ENCODE measurements at regions of chr3 and their contacts with region 1.

Region 1: GRCh38 chr3:103847081-103848062 is 1412.6 kb downstream of the ZPLD1 start:
- DNase-seq: no peak
- H3K4me3 ChIP-seq: no peak overlapping the region
- H3K27ac ChIP-seq: no peak overlapping the region
- H3K4me1 ChIP-seq: no peaks in the 10 kb centered on the region
- H3K27me3 ChIP-seq: no peaks in the 10 kb centered on the region
- CTCF ChIP-seq: no peak
- EP300 ChIP-seq: no peak
- POLR2A ChIP-seq: no peak

Region 2: DNA sequence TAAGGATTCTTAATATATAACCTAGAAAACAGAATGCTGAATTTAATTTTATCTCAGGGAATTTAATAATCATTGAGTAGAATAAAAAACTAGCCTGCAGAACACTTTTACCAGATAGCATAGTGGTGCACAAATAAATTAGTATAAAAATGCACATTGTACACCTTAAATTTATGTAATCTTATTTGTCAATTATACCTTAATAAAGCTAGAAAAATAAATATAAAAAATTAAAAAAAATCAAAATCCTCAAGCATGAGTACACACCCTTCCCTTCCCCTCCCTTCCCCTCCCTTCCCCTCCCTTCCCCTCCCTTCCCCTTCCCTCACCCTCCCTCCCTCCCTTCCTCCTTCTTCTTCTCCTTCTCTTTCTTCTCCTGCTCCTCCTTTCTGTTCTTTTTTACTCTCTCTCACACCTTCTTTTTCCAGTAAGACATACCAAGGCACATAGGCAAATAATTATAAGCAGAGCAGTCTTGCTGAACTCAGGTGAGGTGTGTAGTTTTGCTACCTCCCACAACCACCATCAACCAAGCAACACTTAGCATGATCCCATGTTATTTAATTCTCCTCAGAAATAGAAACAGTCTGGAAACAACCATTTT is 17.5 kb before region 1 on chr3:
- intact Hi-C with region 1: loop called in 1 of 4 experiments (anchors 2 kb)
- DNase-seq: no peak
- H3K4me3 ChIP-seq: no peak overlapping the region
- H3K27ac ChIP-seq: no peak overlapping the region
- H3K4me1 ChIP-seq: no peaks in the 10 kb centered on the region
- H3K27me3 ChIP-seq: no peaks in the 10 kb centered on the region
- CTCF ChIP-seq: no peak
- EP300 ChIP-seq: no peak
- POLR2A ChIP-seq: no peak

Region 3: DNA sequence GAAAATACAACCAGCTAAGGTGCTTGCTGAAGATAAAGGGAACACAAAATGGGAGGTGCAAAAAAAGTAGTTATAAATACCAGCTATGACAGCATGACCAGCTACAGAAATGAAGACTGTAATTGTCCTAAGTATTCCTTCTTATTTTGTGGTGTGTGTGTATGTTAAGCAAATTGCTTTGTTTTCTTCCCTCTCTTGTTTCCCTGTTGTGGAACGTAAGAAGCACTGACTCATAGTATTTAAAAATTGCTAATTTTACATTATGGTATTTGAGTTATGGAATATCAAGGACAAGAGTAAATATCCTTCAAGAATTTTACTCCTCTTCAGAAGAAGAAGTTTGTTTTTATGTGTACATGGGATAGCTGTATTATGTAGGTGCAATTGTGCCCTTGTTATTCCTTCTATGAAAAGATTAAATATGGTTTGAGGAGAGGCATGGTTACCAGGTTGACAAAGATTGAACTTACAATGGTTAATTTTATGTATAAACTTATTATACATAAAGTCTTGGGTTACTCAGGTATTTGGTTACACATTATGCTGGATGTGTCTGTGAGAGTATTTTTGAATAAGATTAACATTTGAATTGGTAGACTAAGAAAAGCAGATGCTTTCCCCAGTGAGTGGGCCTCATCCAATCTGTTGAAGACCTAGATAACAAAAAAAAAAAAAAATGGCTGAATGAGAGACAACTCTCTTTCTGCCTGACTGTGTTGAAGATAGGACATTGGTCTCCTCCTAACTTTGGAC is 387.2 kb after region 1 on chr3:
- intact Hi-C with region 1: no loop called
- DNase-seq: no peak
- H3K4me3 ChIP-seq: no peak overlapping the region
- H3K27ac ChIP-seq: no peak overlapping the region
- H3K4me1 ChIP-seq: no peaks in the 10 kb centered on the region
- H3K27me3 ChIP-seq: no peaks in the 10 kb centered on the region
- CTCF ChIP-seq: no peak
- EP300 ChIP-seq: no peak
- POLR2A ChIP-seq: no peak

Region 4: GRCh38 chr3:104547031-104547430 is 699.7 kb after region 1 on chr3:
- intact Hi-C with region 1: no loop called
- DNase-seq: no peak
- H3K4me3 ChIP-seq: no peak overlapping the region
- H3K27ac ChIP-seq: no peak overlapping the region
- H3K4me1 ChIP-seq: peaks cover 1% of the 10 kb centered on the region
- H3K27me3 ChIP-seq: no peaks in the 10 kb centered on the region
- CTCF ChIP-seq: no peak
- EP300 ChIP-seq: no peak
- POLR2A ChIP-seq: no peak

Measured in ovary (tissue), 10 donors.